ENCODE measurements at regions of chr11 and their contacts with region 1.

Region 1: DNA sequence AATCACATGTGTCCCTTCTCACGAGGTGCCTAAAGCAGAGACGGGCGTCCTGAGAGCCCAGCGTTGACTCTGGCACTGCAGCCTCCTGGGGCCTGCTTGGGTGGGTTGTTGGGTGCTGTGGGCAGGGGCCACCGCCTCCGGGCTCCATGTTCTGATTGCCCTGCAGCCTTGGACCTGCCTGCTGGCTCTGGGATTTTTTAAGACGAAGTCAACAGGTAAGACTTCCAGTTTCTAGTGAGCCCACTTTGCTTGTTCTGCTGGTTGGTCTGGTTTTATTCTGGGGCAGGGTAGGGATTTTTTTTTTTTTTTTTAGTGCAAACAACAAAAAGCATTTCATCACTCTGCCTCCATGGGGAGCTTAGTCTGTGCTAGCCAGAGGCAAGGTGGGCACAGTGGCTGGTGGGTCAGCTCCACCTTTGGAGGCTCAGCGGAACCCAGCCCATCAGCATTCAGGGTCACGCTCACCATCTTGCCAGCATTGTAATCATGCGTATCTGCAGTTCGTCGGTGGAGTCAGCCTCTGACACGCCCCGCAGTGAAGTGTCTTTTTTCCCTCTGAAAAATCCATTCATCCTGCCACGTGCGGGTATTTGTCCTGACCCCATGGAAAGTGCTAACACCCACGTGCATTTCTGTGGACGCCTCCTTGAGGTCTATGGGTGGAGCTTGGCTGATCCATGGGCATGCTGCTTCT is 28.3 kb downstream of the NADSYN1 start:
- DNase-seq: no peak
- H3K4me3 ChIP-seq: no peak overlapping the region
- H3K27ac ChIP-seq: peak overlapping the region in 3 of 4 donors; percentile 51 to 76 (median 68)
- H3K4me1 ChIP-seq: peaks cover 0 to 21% (median 9%) of the 10 kb centered on the region in 3 donors
- H3K27me3 ChIP-seq: no peaks in the 10 kb centered on the region
- CTCF ChIP-seq: no peak
- POLR2A ChIP-seq: no peak

Region 2: GRCh38 chr11:71548716-71549151 is 67.4 kb after region 1 on chr11:
- intact Hi-C with region 1: loop called (anchors 5 kb)
- DNase-seq: no peak
- H3K4me3 ChIP-seq: no peak overlapping the region
- H3K27ac ChIP-seq: no peak overlapping the region
- H3K4me1 ChIP-seq: no peaks in the 10 kb centered on the region
- H3K27me3 ChIP-seq: peaks cover 0 to 15% (median 0%) of the 10 kb centered on the region in 4 donors
- CTCF ChIP-seq: no peak
- POLR2A ChIP-seq: no peak

Region 3: GRCh38 chr11:71580057-71581003 is 99.0 kb after region 1 on chr11:
- intact Hi-C with region 1: no loop called
- DNase-seq: no peak
- H3K4me3 ChIP-seq: no peak overlapping the region
- H3K27ac ChIP-seq: no peak overlapping the region
- H3K4me1 ChIP-seq: peaks cover 0 to 7% (median 0%) of the 10 kb centered on the region in 3 donors
- H3K27me3 ChIP-seq: peaks cover 0 to 33% (median 0%) of the 10 kb centered on the region in 4 donors
- CTCF ChIP-seq: peak; percentile 39 to 80 (median 74)
- POLR2A ChIP-seq: no peak